Gastrocnemius medialis (tissue), 4 donors: ENCODE measurements at regions of chr14 and their contacts with region 1.

Region 1: DNA sequence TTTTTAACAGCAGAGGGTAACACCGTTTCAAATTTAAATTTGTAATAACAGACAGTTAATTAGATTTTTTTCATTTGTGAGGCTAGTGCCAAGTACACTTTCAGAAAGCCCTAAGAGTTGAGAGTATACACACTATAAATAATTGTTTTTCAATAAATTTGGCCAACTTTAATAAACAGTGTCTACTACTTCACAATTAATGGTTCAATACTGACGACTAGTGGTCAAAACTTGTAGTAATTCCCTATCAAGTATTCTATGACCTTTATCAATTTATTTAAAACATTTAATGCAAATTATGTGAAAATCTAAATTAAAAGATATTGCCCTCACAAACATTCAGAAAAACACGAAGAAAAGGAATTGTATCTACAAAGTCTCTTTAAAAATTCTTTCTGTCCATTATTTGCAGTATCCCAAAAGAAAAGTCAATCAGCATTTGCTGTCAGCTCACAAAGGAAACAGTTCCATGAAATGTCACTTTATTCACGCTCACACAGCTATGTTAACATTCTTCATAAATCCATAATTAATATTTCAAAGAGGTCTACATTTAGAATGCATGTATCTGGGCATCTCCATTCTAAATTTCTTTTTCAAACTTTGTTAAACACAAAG is 91.2 kb downstream of the CEP128 start:
- DNase-seq: no peak
- ATAC-seq: peak in 1 of 2 donors; percentile 39
- H3K4me3 ChIP-seq: no peak overlapping the region
- H3K27ac ChIP-seq: no peak overlapping the region
- H3K4me1 ChIP-seq: peaks cover 0 to 3% of the 10 kb centered on the region in 2 donors
- H3K27me3 ChIP-seq: no peaks in the 10 kb centered on the region
- CTCF ChIP-seq: peak; percentile 37 to 68 (median 49)
- POLR2A ChIP-seq: no peak

Region 2: DNA sequence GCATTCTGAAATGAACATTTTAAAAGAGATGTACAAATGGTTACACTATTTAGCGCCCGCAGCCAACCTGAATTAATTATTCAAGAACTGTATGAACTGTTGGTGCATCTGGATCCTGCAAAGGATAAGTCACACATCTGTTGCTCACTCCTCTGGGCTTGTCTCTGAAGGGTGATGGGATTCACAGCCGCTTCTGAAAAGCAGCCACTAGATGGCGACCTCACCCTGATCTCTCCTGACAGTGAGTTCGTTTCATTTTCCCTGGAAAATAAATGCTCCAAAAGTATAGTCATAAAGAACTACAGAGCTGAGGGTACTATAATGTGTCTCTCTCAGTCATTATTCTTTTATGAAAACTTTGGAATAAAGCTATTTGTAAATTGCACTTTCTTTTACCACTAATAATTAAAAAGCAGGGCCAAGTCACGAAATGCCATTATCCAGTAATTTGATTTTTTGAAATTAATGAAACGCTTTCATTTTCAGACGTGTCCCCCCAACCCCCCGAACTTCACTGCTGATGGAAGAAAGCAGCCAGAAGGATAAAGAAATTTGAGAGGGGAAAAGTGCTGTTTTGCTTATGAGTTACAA is 1890.5 kb before region 1 on chr14:
- in situ Hi-C with region 1: loop called in 3 of 4 experiments (anchors 25 kb)
- intact Hi-C with region 1: loop called (anchors 10 kb)
- DNase-seq: peak; percentile 16 to 37
- ATAC-seq: peak; percentile 63 to 69
- H3K4me3 ChIP-seq: peak overlapping the region; percentile 18 to 51 (median 30)
- H3K27ac ChIP-seq: no peak overlapping the region
- H3K4me1 ChIP-seq: peaks cover 0 to 6% of the 10 kb centered on the region in 2 donors
- H3K27me3 ChIP-seq: no peaks in the 10 kb centered on the region
- CTCF ChIP-seq: peak in 4 of 5 experiments; percentile 29 to 79 (median 62)
- POLR2A ChIP-seq: no peak

Region 3: DNA sequence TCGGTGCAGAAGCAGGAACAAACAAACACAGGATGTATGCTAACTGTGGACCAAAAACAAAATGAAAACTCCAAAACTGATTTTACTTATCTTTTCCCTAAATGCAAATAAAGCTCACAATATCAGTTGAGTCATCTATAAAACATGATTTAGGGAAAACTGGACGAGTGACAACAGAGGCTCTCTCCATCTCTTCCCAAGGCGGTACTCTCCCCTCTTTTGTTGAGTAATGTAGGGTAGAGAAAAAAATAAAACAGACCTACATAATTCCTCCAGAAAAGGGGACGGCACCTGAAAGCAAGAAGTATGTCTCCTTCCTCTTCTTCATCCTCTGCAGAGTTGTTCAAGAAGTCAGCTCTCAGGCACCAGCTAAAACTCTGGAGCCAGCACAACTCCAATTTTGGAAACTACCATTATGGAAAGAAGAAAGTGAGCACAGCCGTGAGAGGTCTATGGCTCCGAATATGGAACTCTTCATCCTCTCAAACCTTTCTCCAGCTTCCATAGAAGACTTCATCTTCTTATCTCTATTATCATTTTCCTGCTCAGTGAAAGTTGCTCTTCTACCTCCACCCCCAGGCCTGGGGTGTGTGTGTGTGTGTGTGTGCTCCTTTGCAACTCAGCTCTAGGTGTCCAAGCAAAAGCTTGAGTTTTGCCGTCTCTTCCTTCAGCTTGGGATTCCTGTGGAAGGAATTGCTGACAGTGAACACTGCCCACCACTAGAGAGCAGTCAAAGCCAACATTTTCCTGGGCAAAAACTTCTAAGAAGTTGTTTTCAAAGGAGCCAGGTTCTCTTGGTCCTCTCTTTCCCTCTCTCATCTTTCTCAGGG is 794.4 kb before region 1 on chr14:
- in situ Hi-C with region 1: loop called in 2 of 4 experiments (anchors 25 kb)
- intact Hi-C with region 1: loop called (anchors 2 kb)
- DNase-seq: peak in 1 of 2 donors; percentile 2
- ATAC-seq: peak; percentile 41 to 47
- H3K4me3 ChIP-seq: no peak overlapping the region
- H3K27ac ChIP-seq: no peak overlapping the region
- H3K4me1 ChIP-seq: no peaks in the 10 kb centered on the region
- H3K27me3 ChIP-seq: no peaks in the 10 kb centered on the region
- CTCF ChIP-seq: peak; percentile 32 to 55 (median 51)
- POLR2A ChIP-seq: no peak

Region 4: GRCh38 chr14:80770114-80770908 is 80.0 kb before region 1 on chr14:
- in situ Hi-C with region 1: no loop called
- intact Hi-C with region 1: no loop called
- DNase-seq: no peak
- ATAC-seq: no peak
- H3K4me3 ChIP-seq: no peak overlapping the region
- H3K27ac ChIP-seq: no peak overlapping the region
- H3K4me1 ChIP-seq: no peaks in the 10 kb centered on the region
- H3K27me3 ChIP-seq: no peaks in the 10 kb centered on the region
- CTCF ChIP-seq: no peak
- POLR2A ChIP-seq: no peak

Region 5: GRCh38 chr14:80805136-80805535 is 45.2 kb before region 1 on chr14:
- in situ Hi-C with region 1: no loop called
- intact Hi-C with region 1: no loop called
- DNase-seq: no peak
- ATAC-seq: no peak
- H3K4me3 ChIP-seq: no peak overlapping the region
- H3K27ac ChIP-seq: no peak overlapping the region
- H3K4me1 ChIP-seq: no peaks in the 10 kb centered on the region
- H3K27me3 ChIP-seq: no peaks in the 10 kb centered on the region
- CTCF ChIP-seq: no peak
- POLR2A ChIP-seq: no peak

Region 6: DNA sequence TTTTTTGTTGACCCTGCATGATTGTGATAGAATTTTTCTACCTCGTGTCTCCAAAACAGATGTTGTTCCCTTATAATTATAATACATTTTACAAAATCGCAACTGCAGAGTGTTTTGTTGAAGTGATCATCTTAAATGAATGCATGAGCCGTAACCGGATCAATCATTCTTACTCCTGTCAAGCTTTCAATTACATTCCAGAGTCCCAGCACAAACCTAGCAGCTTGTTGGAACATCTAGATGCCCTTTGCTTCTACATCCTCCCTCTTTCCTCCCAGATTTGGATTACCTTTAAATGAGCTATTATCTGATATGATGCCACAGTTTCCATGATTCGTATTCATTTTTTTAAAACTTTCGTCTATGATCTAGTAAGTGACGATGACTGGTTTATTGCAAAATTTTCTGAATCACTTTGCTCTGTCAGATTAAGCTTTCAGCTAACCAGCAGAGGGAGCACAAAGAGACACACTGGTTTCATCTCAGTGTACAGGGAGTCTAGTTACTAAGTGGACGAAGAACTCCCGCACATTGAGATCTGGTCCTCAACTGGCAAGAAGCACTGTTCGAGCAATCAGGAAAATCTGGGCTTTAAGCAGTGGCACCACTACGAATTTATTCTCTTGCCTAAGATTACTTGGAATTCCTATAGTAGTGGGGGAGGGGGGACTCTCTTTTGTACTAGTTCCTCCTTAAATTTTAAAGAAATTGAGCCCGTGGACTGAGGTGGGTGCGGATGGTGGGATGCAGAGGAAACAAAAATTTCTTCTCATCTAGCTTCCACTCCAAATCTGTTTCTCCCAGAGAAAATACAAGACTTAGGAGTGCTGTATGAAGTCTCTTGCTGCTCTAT is 146.0 kb after region 1 on chr14:
- in situ Hi-C with region 1: no loop called
- intact Hi-C with region 1: no loop called
- DNase-seq: peak; percentile 26 to 32
- ATAC-seq: peak; percentile 99
- H3K4me3 ChIP-seq: peak overlapping the region in 1 of 4 donors; percentile 21
- H3K27ac ChIP-seq: no peak overlapping the region
- H3K4me1 ChIP-seq: no peaks in the 10 kb centered on the region
- H3K27me3 ChIP-seq: no peaks in the 10 kb centered on the region
- CTCF ChIP-seq: peak; percentile 43 to 71 (median 54)
- POLR2A ChIP-seq: no peak